ENCODE measurements at regions of chr17 and their contacts with region 1.

Region 1: GRCh38 chr17:33154869-33155455 is 138.1 kb downstream of the ASIC2 start:
- DNase-seq: no peak
- H3K4me3 ChIP-seq: no peak overlapping the region
- H3K27ac ChIP-seq: no peak overlapping the region
- H3K4me1 ChIP-seq: no peaks in the 10 kb centered on the region
- H3K27me3 ChIP-seq: no peaks in the 10 kb centered on the region
- CTCF ChIP-seq: no peak
- POLR2A ChIP-seq: no peak

Region 2: GRCh38 chr17:32739722-32740121 is 415.2 kb before region 1 on chr17:
- intact Hi-C with region 1: loop called (anchors 5 kb)
- DNase-seq: no peak
- H3K4me3 ChIP-seq: no peak overlapping the region
- H3K27ac ChIP-seq: no peak overlapping the region
- H3K4me1 ChIP-seq: no peaks in the 10 kb centered on the region
- H3K27me3 ChIP-seq: no peaks in the 10 kb centered on the region
- CTCF ChIP-seq: no peak
- POLR2A ChIP-seq: no peak

Region 3: DNA sequence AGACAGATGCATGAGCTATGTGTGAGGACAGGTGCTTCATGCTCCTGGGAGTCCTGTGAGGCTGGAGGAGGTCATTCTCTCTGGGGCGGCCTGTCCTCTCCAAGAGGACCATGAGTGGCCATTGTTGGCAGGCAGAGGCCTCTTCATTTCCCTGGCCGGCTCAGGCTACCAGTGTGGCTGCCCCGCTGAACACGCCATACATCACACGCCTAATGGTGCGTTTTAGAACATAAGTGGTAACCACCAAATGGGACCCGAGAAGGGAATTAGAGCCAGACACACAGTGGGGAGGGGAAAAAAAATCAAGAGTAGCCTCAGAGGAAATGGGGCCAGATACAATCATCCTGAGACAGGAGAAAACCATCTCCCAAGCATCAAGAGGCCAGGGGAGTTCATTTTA is 23.3 kb before region 1 on chr17:
- intact Hi-C with region 1: no loop called
- DNase-seq: no peak
- H3K4me3 ChIP-seq: no peak overlapping the region
- H3K27ac ChIP-seq: no peak overlapping the region
- H3K4me1 ChIP-seq: no peaks in the 10 kb centered on the region
- H3K27me3 ChIP-seq: peaks cover 0 to 10% of the 10 kb centered on the region in 2 donors
- CTCF ChIP-seq: no peak
- POLR2A ChIP-seq: no peak

Measured in breast epithelium (tissue), 4 donors.